Adrenal gland (tissue), 19 donors: ENCODE measurements at regions of chr11 and their contacts with region 1.

Region 1: DNA sequence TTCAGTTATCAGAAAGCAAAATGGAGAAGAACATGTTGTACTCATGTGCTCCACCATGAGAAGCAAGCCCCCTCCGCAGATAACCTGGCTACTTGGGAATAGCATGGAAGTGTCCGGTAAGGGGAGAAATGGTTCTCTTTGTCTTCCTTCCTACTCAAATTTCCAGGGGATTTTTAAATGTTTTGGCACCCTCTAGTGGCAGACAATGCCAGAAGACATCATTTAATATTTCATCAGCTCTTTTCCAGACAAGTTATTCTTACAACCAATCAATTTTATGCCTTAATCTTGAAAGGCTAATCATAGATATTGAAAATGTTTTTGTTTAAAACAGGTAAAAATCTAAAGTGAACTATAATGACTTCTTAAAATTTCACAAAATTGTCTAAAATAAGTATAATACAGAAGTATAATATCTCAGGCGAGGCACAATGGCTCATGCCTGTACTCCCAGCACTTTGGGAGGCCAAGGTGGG is 15.7 kb downstream of the CRTAM start:
- DNase-seq: peak; percentile 36 to 79 (median 61)
- H3K4me3 ChIP-seq: no peak overlapping the region
- H3K27ac ChIP-seq: no peak overlapping the region
- H3K4me1 ChIP-seq: no peaks in the 10 kb centered on the region
- H3K27me3 ChIP-seq: no peaks in the 10 kb centered on the region
- CTCF ChIP-seq: peak; percentile 74 to 82 (median 80)
- POLR2A ChIP-seq: no peak

Region 2: DNA sequence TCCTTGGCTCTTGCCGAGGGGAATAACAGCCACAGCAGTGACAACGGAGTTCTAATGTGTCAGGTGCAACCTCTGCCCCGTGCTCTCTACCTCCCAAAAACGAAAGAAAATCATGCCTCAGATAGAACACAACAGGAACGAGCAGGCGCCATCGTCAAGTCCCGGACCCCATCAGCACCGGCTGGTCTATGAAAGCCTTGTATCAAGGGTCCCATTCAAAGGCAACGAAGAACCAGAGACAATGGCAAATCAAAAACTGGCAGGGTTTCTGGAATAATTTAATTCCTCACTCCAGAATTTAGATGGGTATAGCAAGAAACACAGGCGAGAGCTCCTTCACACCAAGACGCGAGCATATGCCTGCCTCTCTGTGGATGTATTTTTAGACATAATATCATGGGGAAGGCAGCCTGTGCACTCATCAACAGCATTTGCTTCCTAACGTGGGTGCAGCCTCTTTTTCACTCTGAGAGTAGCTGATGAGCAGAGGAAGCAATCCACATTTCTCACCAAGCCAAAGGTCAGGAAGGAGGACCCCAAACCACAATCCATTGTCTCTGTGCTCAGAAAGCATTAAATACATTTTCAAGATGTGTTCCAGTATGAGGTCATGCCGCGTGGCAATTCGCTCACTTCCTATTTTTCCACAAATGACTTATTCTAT is 544.6 kb before region 1 on chr11:
- intact Hi-C with region 1: no loop called
- DNase-seq: no peak
- H3K4me3 ChIP-seq: no peak overlapping the region
- H3K27ac ChIP-seq: no peak overlapping the region
- H3K4me1 ChIP-seq: no peaks in the 10 kb centered on the region
- H3K27me3 ChIP-seq: no peaks in the 10 kb centered on the region
- CTCF ChIP-seq: no peak
- POLR2A ChIP-seq: no peak

Region 3: DNA sequence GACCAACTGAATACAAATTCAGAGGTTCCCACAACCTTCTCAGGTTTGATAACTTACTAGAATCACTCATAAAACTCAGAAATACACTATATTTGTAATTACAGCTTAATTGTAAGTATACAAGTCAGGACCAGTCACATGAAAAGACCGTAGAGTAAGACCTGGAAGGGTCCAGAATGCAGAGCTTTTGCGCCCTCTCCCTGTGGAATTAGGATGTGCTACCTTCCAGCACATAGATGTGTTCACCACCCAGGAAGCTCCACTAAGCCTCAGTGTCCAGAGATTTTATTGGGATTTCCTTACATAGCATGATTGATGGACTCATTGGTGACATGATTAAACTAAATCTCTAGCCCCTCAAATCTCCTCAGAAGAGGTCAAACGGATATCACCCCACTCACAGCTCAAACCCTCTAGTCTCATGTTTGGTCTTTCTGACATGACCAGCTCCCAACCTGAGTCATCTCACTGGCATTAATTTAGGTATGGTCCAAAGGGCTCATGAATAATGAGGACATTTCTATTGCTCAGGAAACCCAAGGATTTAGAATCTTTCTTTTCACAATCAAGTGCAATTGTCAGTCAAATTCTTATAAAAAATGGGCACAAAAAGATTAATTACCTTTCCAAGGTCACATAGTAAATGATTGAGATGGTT is 275.7 kb before region 1 on chr11:
- intact Hi-C with region 1: loop called in 1 of 2 experiments (anchors 5 kb)
- DNase-seq: no peak
- H3K4me3 ChIP-seq: no peak overlapping the region
- H3K27ac ChIP-seq: no peak overlapping the region
- H3K4me1 ChIP-seq: peaks cover 0 to 4% of the 10 kb centered on the region in 2 donors
- H3K27me3 ChIP-seq: no peaks in the 10 kb centered on the region
- CTCF ChIP-seq: no peak
- POLR2A ChIP-seq: no peak

Region 4: DNA sequence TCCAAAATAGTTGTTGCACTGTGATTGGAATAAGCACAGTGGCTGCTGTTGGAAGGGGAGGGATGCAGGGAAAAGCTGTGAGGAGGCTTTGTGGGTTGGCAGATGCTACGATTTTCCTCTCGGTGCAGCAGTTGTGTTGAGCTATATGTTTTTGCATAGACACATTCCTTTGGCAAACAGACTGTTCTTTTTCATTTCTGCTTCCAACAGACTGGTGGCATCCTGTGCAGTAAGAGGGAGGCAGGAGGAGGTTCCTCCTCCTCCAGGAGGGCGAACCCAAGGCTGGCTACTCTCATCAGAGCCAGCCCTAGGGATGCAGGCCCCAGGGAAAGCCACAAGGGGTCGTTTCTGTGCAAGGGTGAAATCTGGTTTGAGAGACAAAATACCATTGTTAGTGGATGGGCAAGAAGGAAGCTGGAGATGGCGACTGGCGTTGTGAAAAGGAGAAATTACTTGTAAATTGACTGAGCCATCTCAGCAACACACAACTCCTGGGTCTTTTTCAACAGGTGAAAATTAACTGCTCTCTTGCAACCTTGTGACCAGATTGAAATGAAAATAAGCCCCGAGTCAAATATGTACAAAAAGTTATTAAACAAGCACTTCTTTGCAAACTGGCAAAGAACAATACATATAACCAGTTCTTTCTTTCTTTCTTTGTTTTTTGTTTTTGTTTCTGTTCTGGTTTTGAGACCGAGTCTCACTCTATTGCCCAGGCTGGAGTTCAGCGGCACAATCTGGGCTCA is 225.0 kb before region 1 on chr11:
- intact Hi-C with region 1: loop called (anchors 10 kb)
- DNase-seq: peak; percentile 64 to 88 (median 73)
- H3K4me3 ChIP-seq: no peak overlapping the region
- H3K27ac ChIP-seq: no peak overlapping the region
- H3K4me1 ChIP-seq: no peaks in the 10 kb centered on the region
- H3K27me3 ChIP-seq: peaks cover 4% of the 10 kb centered on the region
- CTCF ChIP-seq: peak; percentile 65 to 91 (median 82)
- POLR2A ChIP-seq: no peak

Region 5: GRCh38 chr11:122796128-122796717 is 57.8 kb before region 1 on chr11:
- intact Hi-C with region 1: loop called (anchors 5 to 10 kb)
- DNase-seq: peak in 6 of 7 donors; percentile 26 to 73 (median 46)
- H3K4me3 ChIP-seq: no peak overlapping the region
- H3K27ac ChIP-seq: no peak overlapping the region
- H3K4me1 ChIP-seq: no peaks in the 10 kb centered on the region
- H3K27me3 ChIP-seq: no peaks in the 10 kb centered on the region
- CTCF ChIP-seq: peak; percentile 50 to 77 (median 70)
- POLR2A ChIP-seq: no peak

Region 6: GRCh38 chr11:122808478-122808869 is 45.5 kb before region 1 on chr11:
- intact Hi-C with region 1: loop called in 1 of 2 experiments (anchors 10 kb)
- DNase-seq: no peak
- H3K4me3 ChIP-seq: no peak overlapping the region
- H3K27ac ChIP-seq: peak overlapping the region in 2 of 5 donors; percentile 8 to 52
- H3K4me1 ChIP-seq: peaks cover 0 to 7% of the 10 kb centered on the region in 2 donors
- H3K27me3 ChIP-seq: no peaks in the 10 kb centered on the region
- CTCF ChIP-seq: no peak
- POLR2A ChIP-seq: no peak